Naive thymus-derived CD4-positive, alpha-beta T cell (primary cell): ENCODE measurements at regions of chr20 and their contacts with region 1.

Region 1: GRCh38 chr20:44092551-44093248 is 94.3 kb downstream of the JPH2 start:
- DNase-seq: peak in 4 of 9 donors; percentile 29 to 47 (median 32)
- ATAC-seq: no peak
- H3K4me3 ChIP-seq: no peak overlapping the region
- H3K4me3 Mint-ChIP-seq: no peak overlapping the region
- H3K27ac ChIP-seq: no peak overlapping the region
- H3K27ac Mint-ChIP-seq: peak overlapping the region in 2 of 9 donors; percentile 49 to 52
- H3K4me1 ChIP-seq: no peaks in the 10 kb centered on the region
- H3K4me1 Mint-ChIP-seq: peaks cover 0 to 5% (median 0%) of the 10 kb centered on the region in 7 donors
- H3K27me3 ChIP-seq: no peaks in the 10 kb centered on the region
- H3K27me3 Mint-ChIP-seq: peaks cover 0 to 26% (median 9%) of the 10 kb centered on the region in 5 donors

Region 2: GRCh38 chr20:43448748-43449535 is 643.8 kb before region 1 on chr20:
- CTCF ChIA-PET with region 1: no interaction called
- POLR2A ChIA-PET with region 1: no interaction called
- intact Hi-C with region 1: loop called (anchors 1 kb)
- DNase-seq: peak in 6 of 9 donors; percentile 28 to 47 (median 38)
- ATAC-seq: peak; percentile 70
- H3K4me3 ChIP-seq: no peak overlapping the region
- H3K4me3 Mint-ChIP-seq: peak overlapping the region in 1 of 10 donors; percentile 21
- H3K27ac ChIP-seq: no peak overlapping the region
- H3K27ac Mint-ChIP-seq: no peak overlapping the region
- H3K4me1 ChIP-seq: no peaks in the 10 kb centered on the region
- H3K4me1 Mint-ChIP-seq: peaks cover 0 to 8% (median 4%) of the 10 kb centered on the region in 7 donors
- H3K27me3 ChIP-seq: no peaks in the 10 kb centered on the region
- H3K27me3 Mint-ChIP-seq: peaks cover 8 to 35% (median 22%) of the 10 kb centered on the region in 5 donors

Region 3: GRCh38 chr20:44056010-44056698 is 36.5 kb before region 1 on chr20:
- CTCF ChIA-PET with region 1: interaction called, 7 read pairs
- POLR2A ChIA-PET with region 1: interaction called, 3 read pairs
- intact Hi-C with region 1: loop called in 1 of 2 experiments (anchors 1 kb)
- DNase-seq: peak in 8 of 9 donors; percentile 41 to 83 (median 74)
- ATAC-seq: peak; percentile 96
- H3K4me3 ChIP-seq: no peak overlapping the region
- H3K4me3 Mint-ChIP-seq: no peak overlapping the region
- H3K27ac ChIP-seq: no peak overlapping the region
- H3K27ac Mint-ChIP-seq: peak overlapping the region in 7 of 9 donors; percentile 6 to 85 (median 33)
- H3K4me1 ChIP-seq: peaks cover 0 to 9% of the 10 kb centered on the region in 2 donors
- H3K4me1 Mint-ChIP-seq: peaks cover 10 to 49% (median 30%) of the 10 kb centered on the region in 7 donors
- H3K27me3 ChIP-seq: no peaks in the 10 kb centered on the region
- H3K27me3 Mint-ChIP-seq: peaks cover 0 to 19% (median 0%) of the 10 kb centered on the region in 5 donors

Region 4: GRCh38 chr20:44271915-44272663 is 179.4 kb after region 1 on chr20:
- CTCF ChIA-PET with region 1: no interaction called
- POLR2A ChIA-PET with region 1: no interaction called
- intact Hi-C with region 1: no loop called
- DNase-seq: peak in 3 of 9 donors; percentile 7 to 41 (median 8)
- ATAC-seq: peak; percentile 48
- H3K4me3 ChIP-seq: no peak overlapping the region
- H3K4me3 Mint-ChIP-seq: no peak overlapping the region
- H3K27ac ChIP-seq: no peak overlapping the region
- H3K27ac Mint-ChIP-seq: no peak overlapping the region
- H3K4me1 ChIP-seq: no peaks in the 10 kb centered on the region
- H3K4me1 Mint-ChIP-seq: peaks cover 0 to 2% (median 0%) of the 10 kb centered on the region in 7 donors
- H3K27me3 ChIP-seq: no peaks in the 10 kb centered on the region
- H3K27me3 Mint-ChIP-seq: no peaks in the 10 kb centered on the region